Caco-2 (cell line): ENCODE measurements at regions of chr1 and their contacts with region 1.

Region 1: DNA sequence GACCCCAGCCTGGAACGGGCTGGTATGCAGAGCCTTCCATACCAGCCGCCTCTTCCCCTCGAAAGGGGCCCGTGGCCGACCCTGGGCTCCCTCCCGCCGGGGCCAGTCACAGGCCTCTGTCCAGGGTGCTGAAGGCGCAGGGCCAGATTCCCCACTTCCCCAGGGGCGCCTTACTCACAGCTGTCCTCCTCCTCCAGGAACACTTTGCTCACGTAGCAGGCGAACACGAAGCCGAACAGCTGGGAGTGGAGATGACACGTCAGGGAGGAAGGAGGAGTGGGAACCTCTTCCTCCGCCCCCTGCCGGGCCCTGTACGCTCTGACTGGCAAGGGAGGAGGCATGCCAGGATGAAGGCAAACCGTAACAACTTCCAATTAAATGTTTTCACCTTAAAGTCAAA is 57.3 kb downstream of the NKAIN1 start:
- DNase-seq: peak; percentile 80 to 85
- H3K4me3 ChIP-seq: peak overlapping the region; percentile 34
- H3K4me3 Mint-ChIP-seq: peak overlapping the region; percentile 82
- H3K27ac Mint-ChIP-seq: no peak overlapping the region
- H3K4me1 ChIP-seq: no peaks in the 10 kb centered on the region
- H3K4me1 Mint-ChIP-seq: no peaks in the 10 kb centered on the region
- H3K27me3 ChIP-seq: no peaks in the 10 kb centered on the region
- H3K27me3 Mint-ChIP-seq: peaks cover 10% of the 10 kb centered on the region
- CTCF ChIP-seq: no peak

Region 2: DNA sequence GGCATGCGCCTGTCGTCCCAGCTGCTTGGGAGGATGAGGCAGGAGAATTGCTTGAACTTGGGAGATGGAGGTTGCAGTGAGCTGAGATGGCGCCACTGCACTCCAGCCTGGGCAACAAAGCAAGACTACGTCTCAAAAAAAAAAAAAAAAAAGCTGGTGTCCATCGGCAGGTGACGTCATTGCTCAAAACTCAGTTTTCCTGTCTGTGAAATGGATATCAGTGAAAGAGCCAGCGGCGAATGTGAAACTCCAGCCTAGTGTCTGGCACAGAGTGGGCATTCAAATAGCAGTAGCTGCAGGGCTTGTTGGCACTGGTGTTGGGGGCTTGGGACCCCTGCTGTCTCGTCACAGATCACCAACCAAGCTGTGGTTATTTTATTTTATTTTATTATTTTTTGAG is 18.5 kb before region 1 on chr1:
- CTCF ChIA-PET with region 1: interaction called, 4 read pairs
- POLR2A ChIA-PET with region 1: no interaction called
- intact Hi-C with region 1: loop called (anchors 2 kb)
- DNase-seq: no peak
- H3K4me3 ChIP-seq: no peak overlapping the region
- H3K4me3 Mint-ChIP-seq: no peak overlapping the region
- H3K27ac Mint-ChIP-seq: no peak overlapping the region
- H3K4me1 ChIP-seq: peaks cover 13% of the 10 kb centered on the region
- H3K4me1 Mint-ChIP-seq: peaks cover 14% of the 10 kb centered on the region
- H3K27me3 ChIP-seq: no peaks in the 10 kb centered on the region
- H3K27me3 Mint-ChIP-seq: no peaks in the 10 kb centered on the region
- CTCF ChIP-seq: no peak

Region 3: DNA sequence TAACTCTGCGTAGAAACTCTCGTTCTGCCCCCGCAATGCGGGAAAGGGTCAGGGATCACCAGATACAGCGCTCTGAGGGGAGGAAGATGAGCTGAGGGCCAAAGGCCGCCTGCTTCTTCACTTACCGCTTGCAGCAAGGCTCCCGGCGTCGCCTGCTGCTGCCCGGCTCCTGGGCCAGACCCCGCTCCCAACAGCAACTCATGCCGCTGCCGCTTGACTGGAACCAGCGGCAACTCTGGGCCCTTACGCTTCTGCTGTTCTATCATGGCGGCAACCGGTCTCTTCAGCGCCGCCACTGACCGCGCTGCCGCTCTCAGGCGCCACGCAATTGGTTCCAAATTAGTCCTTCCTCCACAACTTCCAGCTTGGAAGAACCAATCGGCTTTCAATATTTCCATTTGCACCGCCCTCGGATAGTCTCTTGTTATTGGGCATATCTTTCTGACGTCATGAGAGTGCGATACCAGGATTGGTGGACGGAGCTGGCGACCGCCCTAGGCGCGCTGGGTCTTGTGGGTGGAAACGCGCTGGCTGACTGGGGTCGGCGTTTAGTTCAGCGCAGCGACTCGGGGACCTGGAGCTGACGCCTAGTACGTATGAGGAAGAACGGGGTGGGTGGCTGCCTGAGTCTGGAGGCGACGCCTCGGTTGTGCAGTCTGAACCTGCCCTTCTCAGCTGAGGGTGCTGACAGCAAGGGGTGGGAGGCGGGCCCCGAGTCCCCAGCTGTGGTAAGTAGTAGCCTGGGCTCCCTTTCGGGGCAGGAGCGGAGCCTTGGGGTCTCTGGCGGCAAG is 114.3 kb after region 1 on chr1 and contains the starts of genes SNRNP40 and ZCCHC17:
- CTCF ChIA-PET with region 1: interaction called, 4 read pairs
- POLR2A ChIA-PET with region 1: no interaction called
- intact Hi-C with region 1: loop called (anchors 5 kb)
- DNase-seq: peak; percentile 92 to 96
- H3K4me3 ChIP-seq: peak within 1 kb of the TSS; percentile 74
- H3K4me3 Mint-ChIP-seq: no peak within 1 kb of the TSS
- H3K27ac Mint-ChIP-seq: no peak within 1 kb of the TSS
- H3K4me1 ChIP-seq: no peaks in the 10 kb centered on the region
- H3K4me1 Mint-ChIP-seq: peaks cover 9% of the 10 kb centered on the region
- H3K27me3 ChIP-seq: no peaks in the 10 kb centered on the region
- H3K27me3 Mint-ChIP-seq: no peaks in the 10 kb centered on the region
- CTCF ChIP-seq: no peak
- total RNA-seq, gene SNRNP40: 49.5 and 56.5 TPM in 2 replicates
- total RNA-seq, gene ZCCHC17: 21.4 and 24.1 TPM in 2 replicates

Region 4: DNA sequence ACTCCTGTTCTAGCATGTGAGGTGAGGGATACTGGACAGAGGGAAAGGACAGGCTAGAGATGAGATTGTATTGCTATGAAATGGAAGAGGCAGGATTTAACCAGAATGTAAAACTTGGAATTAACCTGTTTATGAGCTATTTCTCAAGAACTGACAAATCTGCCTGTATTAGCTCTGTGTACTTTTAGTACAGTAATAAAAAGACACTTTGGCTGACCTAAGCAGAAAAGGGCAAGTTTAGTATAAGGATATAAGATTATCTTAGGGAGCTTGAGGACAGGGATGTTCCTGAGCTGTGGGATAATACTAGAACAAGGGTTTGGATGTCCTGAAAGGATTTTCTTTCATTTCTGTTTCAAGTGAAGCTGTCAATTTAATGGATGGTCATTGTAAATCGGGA is 125.7 kb after region 1 on chr1:
- CTCF ChIA-PET with region 1: no interaction called
- POLR2A ChIA-PET with region 1: no interaction called
- intact Hi-C with region 1: no loop called
- DNase-seq: no peak
- H3K4me3 ChIP-seq: no peak overlapping the region
- H3K4me3 Mint-ChIP-seq: no peak overlapping the region
- H3K27ac Mint-ChIP-seq: no peak overlapping the region
- H3K4me1 ChIP-seq: no peaks in the 10 kb centered on the region
- H3K4me1 Mint-ChIP-seq: no peaks in the 10 kb centered on the region
- H3K27me3 ChIP-seq: no peaks in the 10 kb centered on the region
- H3K27me3 Mint-ChIP-seq: no peaks in the 10 kb centered on the region
- CTCF ChIP-seq: no peak

Region 5: GRCh38 chr1:31318146-31318545 is 135.8 kb after region 1 on chr1:
- CTCF ChIA-PET with region 1: interaction called, 10 read pairs
- POLR2A ChIA-PET with region 1: no interaction called
- intact Hi-C with region 1: no loop called
- DNase-seq: no peak
- H3K4me3 ChIP-seq: no peak overlapping the region
- H3K4me3 Mint-ChIP-seq: no peak overlapping the region
- H3K27ac Mint-ChIP-seq: no peak overlapping the region
- H3K4me1 ChIP-seq: no peaks in the 10 kb centered on the region
- H3K4me1 Mint-ChIP-seq: no peaks in the 10 kb centered on the region
- H3K27me3 ChIP-seq: no peaks in the 10 kb centered on the region
- H3K27me3 Mint-ChIP-seq: no peaks in the 10 kb centered on the region
- CTCF ChIP-seq: no peak

Region 6: DNA sequence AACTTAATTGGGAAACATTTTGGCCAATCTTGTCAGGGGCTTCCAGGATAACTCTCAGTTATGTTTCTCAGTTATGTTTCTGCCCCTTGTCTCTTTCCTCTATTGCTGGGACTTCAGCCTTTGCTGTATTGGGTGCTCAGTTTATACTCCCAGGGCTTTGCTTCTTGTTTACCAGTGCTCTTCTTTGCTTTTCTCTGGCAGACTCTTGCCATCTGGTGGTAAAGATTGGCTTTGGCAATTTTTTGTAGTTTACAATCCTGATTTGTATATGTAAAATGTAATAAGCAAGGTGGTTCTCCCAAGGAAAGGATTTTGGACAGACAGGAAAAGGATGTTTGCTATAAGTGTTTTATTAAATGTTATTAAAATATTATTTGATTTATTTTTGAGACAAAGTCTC is 152.7 kb after region 1 on chr1:
- CTCF ChIA-PET with region 1: interaction called, 3 read pairs
- POLR2A ChIA-PET with region 1: no interaction called
- intact Hi-C with region 1: loop called (anchors 1 kb)
- DNase-seq: peak in 1 of 2 experiments; percentile 33
- H3K4me3 ChIP-seq: no peak overlapping the region
- H3K4me3 Mint-ChIP-seq: no peak overlapping the region
- H3K27ac Mint-ChIP-seq: no peak overlapping the region
- H3K4me1 ChIP-seq: no peaks in the 10 kb centered on the region
- H3K4me1 Mint-ChIP-seq: no peaks in the 10 kb centered on the region
- H3K27me3 ChIP-seq: no peaks in the 10 kb centered on the region
- H3K27me3 Mint-ChIP-seq: no peaks in the 10 kb centered on the region
- CTCF ChIP-seq: peak in 1 of 2 experiments; percentile 46

Region 7: DNA sequence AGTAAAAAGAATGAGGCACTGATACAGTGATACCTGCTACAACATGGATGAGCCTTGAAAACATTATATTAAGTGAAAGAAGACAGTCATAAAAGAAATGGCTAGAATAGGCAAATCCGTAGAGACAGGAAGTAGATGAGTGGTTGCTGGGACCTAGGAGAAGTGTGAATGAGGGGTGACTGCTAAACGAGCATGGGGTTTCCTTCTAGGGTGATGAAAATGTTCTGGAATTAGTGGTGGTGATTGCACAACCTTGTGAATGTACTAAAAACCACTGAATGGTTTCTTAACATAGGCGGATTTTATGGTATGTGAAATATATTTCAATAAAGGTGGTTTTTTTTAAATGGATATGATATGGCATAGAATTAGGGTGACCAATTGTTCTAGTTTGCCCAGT is 218.0 kb after region 1 on chr1:
- CTCF ChIA-PET with region 1: no interaction called
- POLR2A ChIA-PET with region 1: no interaction called
- intact Hi-C with region 1: no loop called
- DNase-seq: no peak
- H3K4me3 ChIP-seq: no peak overlapping the region
- H3K4me3 Mint-ChIP-seq: no peak overlapping the region
- H3K27ac Mint-ChIP-seq: no peak overlapping the region
- H3K4me1 ChIP-seq: peaks cover 7% of the 10 kb centered on the region; the same call in 1 of the 2 replicates
- H3K4me1 Mint-ChIP-seq: peaks cover 6% of the 10 kb centered on the region
- H3K27me3 ChIP-seq: no peaks in the 10 kb centered on the region
- H3K27me3 Mint-ChIP-seq: no peaks in the 10 kb centered on the region
- CTCF ChIP-seq: no peak

Region 8: GRCh38 chr1:31422505-31423319 is 240.4 kb after region 1 on chr1:
- CTCF ChIA-PET with region 1: interaction called, 5 read pairs
- POLR2A ChIA-PET with region 1: no interaction called
- intact Hi-C with region 1: loop called (anchors 1 kb)
- DNase-seq: peak; percentile 70 to 77
- H3K4me3 ChIP-seq: no peak overlapping the region
- H3K4me3 Mint-ChIP-seq: no peak overlapping the region
- H3K27ac Mint-ChIP-seq: peak overlapping the region; percentile 82
- H3K4me1 ChIP-seq: peaks cover 3% of the 10 kb centered on the region; the same call in 1 of the 2 replicates
- H3K4me1 Mint-ChIP-seq: no peaks in the 10 kb centered on the region
- H3K27me3 ChIP-seq: no peaks in the 10 kb centered on the region
- H3K27me3 Mint-ChIP-seq: no peaks in the 10 kb centered on the region
- CTCF ChIP-seq: peak; percentile 71 to 78